ENCODE measurements at regions of chr1 and their contacts with region 1.

Region 1: GRCh38 chr1:230867903-230868735 is at the start of gene C1orf198:
- DNase-seq: peak; percentile 75 to 85
- ATAC-seq: peak; percentile 80 to 94 (median 90)
- H3K4me3 ChIP-seq: peak within 1 kb of the TSS; percentile 61 to 95 (median 92)
- H3K27ac ChIP-seq: peak within 1 kb of the TSS; percentile 54 to 96 (median 90)
- H3K4me1 ChIP-seq: peaks cover 24 to 57% (median 51%) of the 10 kb centered on the region in 9 donors
- H3K27me3 ChIP-seq: peaks cover 0 to 27% (median 0%) of the 10 kb centered on the region in 7 donors
- CTCF ChIP-seq: no peak
- total RNA-seq, gene C1orf198: 33.4 to 66.0 (median 46.0) TPM

Region 2: GRCh38 chr1:230807029-230807428 is 61.1 kb before region 1 on chr1:
- intact Hi-C with region 1: loop called in 7 of 10 experiments (anchors 5 to 10 kb)
- DNase-seq: peak; percentile 68 to 81
- ATAC-seq: peak; percentile 85 to 98 (median 95)
- H3K4me3 ChIP-seq: no peak overlapping the region
- H3K27ac ChIP-seq: peak overlapping the region in 7 of 10 donors; percentile 44 to 74 (median 51)
- H3K4me1 ChIP-seq: peaks cover 0 to 36% (median 10%) of the 10 kb centered on the region in 9 donors
- H3K27me3 ChIP-seq: no peaks in the 10 kb centered on the region
- CTCF ChIP-seq: no peak

Region 3: GRCh38 chr1:230818367-230818766 is 49.8 kb before region 1 on chr1:
- intact Hi-C with region 1: loop called in 4 of 10 experiments (anchors 5 to 10 kb)
- DNase-seq: no peak
- ATAC-seq: no peak
- H3K4me3 ChIP-seq: no peak overlapping the region
- H3K27ac ChIP-seq: no peak overlapping the region
- H3K4me1 ChIP-seq: peaks cover 5 to 54% (median 23%) of the 10 kb centered on the region in 9 donors
- H3K27me3 ChIP-seq: no peaks in the 10 kb centered on the region
- CTCF ChIP-seq: no peak

Region 4: DNA sequence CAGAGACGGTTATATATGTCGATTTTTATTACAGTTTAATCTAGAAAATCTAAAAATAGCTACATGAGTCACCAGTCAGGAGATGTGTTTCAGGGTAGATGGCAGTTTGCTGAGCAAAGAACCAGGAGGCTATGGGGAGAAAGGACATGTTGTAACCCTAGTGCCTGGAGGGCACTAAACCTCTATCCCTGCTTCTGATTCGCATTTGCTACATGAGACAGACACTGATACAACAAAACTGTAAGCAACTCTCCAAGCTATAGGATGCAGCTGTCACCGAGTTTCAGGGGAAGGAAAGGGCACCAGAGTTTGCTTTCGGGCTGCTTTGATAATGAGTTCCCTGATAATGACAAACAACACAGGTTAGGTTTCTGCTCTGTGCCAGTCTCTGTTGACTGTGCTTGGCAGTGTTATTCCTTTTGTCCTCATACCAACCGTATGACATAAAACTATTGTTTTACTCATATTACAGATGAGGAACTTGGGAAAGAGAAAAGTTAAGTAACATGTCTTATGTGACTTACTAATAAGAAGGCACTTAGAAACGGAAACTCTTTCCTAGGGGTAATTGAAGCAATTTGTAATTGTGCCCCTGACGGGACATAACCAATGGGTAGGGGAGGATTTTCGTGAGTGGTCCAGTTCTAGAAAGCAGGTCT is 42.9 kb before region 1 on chr1:
- intact Hi-C with region 1: loop called in 4 of 10 experiments (anchors 2 to 5 kb)
- DNase-seq: no peak
- ATAC-seq: peak in 7 of 8 donors; percentile 51 to 81 (median 71)
- H3K4me3 ChIP-seq: no peak overlapping the region
- H3K27ac ChIP-seq: peak overlapping the region; percentile 75 to 93 (median 86)
- H3K4me1 ChIP-seq: peaks cover 20 to 89% (median 66%) of the 10 kb centered on the region in 9 donors
- H3K27me3 ChIP-seq: no peaks in the 10 kb centered on the region
- CTCF ChIP-seq: no peak

Region 5: GRCh38 chr1:230849451-230850224 is 18.5 kb before region 1 on chr1:
- intact Hi-C with region 1: loop called in 1 of 10 experiments (anchors 2 kb)
- DNase-seq: peak; percentile 57 to 88
- ATAC-seq: peak; percentile 89 to 96 (median 93)
- H3K4me3 ChIP-seq: peak overlapping the region in 1 of 10 donors; percentile 4
- H3K27ac ChIP-seq: peak overlapping the region; percentile 72 to 94 (median 83)
- H3K4me1 ChIP-seq: peaks cover 28 to 72% (median 59%) of the 10 kb centered on the region in 9 donors
- H3K27me3 ChIP-seq: no peaks in the 10 kb centered on the region
- CTCF ChIP-seq: no peak

Region 6: GRCh38 chr1:230909974-230910754 is 42.0 kb after region 1 on chr1:
- intact Hi-C with region 1: loop called in 1 of 10 experiments (anchors 2 kb)
- DNase-seq: peak in 1 of 2 donors; percentile 38
- ATAC-seq: peak; percentile 78 to 97 (median 92)
- H3K4me3 ChIP-seq: no peak overlapping the region
- H3K27ac ChIP-seq: peak overlapping the region in 4 of 10 donors; percentile 18 to 50 (median 34)
- H3K4me1 ChIP-seq: peaks cover 0 to 15% (median 5%) of the 10 kb centered on the region in 9 donors
- H3K27me3 ChIP-seq: no peaks in the 10 kb centered on the region
- CTCF ChIP-seq: no peak

Measured in heart right ventricle (tissue), 16 donors.